Posterior vena cava (tissue), 2 donors: ENCODE measurements at regions of chr3 and their contacts with region 1.

Region 1: DNA sequence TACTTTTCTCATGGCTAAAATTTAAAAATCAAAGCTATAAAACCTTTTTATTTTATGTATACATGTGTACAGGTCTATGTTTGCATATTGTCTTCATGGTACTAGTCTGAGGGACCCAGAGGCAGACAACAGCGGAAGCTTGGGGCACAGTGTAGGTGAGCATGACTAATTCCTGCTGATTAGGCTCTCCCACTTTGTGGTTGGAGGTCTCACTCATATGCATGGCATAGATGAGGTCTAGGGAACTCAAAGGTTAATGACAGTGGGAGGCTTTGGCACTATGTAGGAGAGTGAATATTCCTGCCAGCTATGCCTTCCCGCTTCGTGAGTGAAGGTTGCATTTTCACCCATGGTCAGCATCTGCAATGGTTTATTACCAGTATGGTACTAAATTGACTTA is 47.5 kb upstream of the AADACL2 start:
- DNase-seq: no peak

Region 2: DNA sequence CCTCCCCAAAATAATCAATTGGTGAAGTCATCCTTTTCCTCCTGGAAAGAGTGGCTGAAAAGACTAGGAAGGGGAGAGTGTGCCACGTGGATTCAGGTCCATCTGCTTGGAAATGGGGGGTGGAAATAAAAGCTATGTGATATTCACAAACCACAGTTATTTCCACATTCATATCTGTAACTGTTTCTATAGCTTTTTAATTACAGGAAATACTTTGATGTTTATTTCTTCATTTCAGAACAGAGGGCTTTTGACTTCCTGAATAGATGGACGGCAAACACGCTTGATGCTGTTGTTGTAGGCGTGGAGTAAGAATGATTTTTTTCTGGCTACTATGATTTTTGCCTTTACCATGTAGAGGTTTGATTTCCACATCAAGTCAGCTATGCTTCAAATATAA is 57.6 kb after region 1 on chr3:
- intact Hi-C with region 1: loop called in 1 of 2 experiments (anchors 10 kb)
- DNase-seq: no peak